Gastrocnemius medialis (tissue), 4 donors: ENCODE measurements at regions of chr6 and their contacts with region 1.

Region 1: DNA sequence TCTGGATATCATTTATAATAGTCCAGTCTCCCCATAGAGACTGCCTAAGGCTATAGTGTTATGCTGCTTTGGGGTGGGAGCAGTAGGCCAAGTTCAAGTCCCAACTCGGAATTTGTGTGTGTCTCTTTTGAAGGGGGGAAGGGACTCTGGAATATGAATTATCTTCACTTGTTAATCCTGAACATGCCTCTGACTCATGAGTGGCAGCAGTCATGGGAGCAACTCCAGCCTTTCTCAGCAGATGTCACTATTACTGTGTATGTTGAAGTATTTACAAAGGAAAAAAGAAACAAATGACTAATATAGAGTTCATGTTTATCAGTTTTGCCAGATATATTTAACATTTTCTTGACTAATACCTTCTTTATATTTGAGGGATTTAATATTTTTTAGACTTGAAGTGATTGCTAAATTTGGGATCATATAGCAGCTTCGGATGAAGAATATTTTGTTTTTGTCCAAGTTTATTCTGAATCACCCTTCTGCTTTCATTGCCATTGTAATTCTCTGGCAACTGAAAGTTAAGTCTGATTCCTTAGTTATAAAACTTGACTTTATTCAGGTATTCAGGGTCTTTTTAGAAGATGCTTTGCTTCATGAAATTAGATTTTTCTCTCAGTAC is 23.4 kb downstream of the FAM217A start:
- DNase-seq: peak; percentile 40 to 49
- ATAC-seq: peak; percentile 93 to 95
- H3K4me3 ChIP-seq: no peak overlapping the region
- H3K27ac ChIP-seq: peak overlapping the region; percentile 71 to 76 (median 71)
- H3K4me1 ChIP-seq: peaks cover 4% of the 10 kb centered on the region in 2 donors
- H3K27me3 ChIP-seq: no peaks in the 10 kb centered on the region
- CTCF ChIP-seq: peak in 4 of 5 experiments; percentile 45 to 64 (median 52)
- POLR2A ChIP-seq: no peak

Region 2: DNA sequence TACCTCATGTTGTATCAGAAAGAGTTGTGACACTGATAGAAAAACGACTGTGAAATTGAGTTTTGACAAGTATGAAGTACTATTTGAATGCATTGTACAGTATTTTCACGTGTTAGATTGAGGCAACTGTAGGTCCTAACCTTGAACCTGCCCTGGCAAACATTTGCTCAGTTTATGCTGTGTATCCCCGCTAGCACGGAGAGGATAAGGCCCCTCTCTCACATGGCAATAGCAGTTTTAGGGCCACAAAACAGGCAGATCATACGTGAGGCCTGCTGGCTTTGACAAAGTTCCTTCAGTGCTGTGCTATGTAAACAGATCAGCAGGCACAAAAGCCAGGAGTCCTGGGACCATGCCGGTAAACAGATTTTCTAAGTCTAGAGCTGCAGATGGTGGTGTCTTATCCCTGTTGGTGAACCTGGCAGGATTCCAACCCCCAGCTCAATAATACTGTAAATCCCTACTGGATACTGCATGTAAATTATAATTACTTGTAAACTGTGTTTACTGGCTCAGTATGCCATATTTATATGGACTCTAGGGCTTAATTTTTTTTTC is 47.2 kb after region 1 on chr6:
- in situ Hi-C with region 1: no loop called
- intact Hi-C with region 1: loop called (anchors 5 kb)
- DNase-seq: no peak
- ATAC-seq: peak in 1 of 2 donors; percentile 75
- H3K4me3 ChIP-seq: no peak overlapping the region
- H3K27ac ChIP-seq: peak overlapping the region; percentile 55 to 77 (median 66)
- H3K4me1 ChIP-seq: peaks cover 29 to 43% of the 10 kb centered on the region in 2 donors
- H3K27me3 ChIP-seq: no peaks in the 10 kb centered on the region
- CTCF ChIP-seq: no peak
- POLR2A ChIP-seq: no peak

Region 3: GRCh38 chr6:4145083-4145482 is 89.6 kb after region 1 on chr6:
- in situ Hi-C with region 1: loop called in 2 of 4 experiments (anchors 5 to 10 kb)
- intact Hi-C with region 1: no loop called
- DNase-seq: no peak
- ATAC-seq: no peak
- H3K4me3 ChIP-seq: no peak overlapping the region
- H3K27ac ChIP-seq: no peak overlapping the region
- H3K4me1 ChIP-seq: no peaks in the 10 kb centered on the region
- H3K27me3 ChIP-seq: no peaks in the 10 kb centered on the region
- CTCF ChIP-seq: no peak
- POLR2A ChIP-seq: no peak

Region 4: GRCh38 chr6:4155848-4156466 is 100.4 kb after region 1 on chr6:
- in situ Hi-C with region 1: loop called in 3 of 4 experiments (anchors 5 to 10 kb)
- intact Hi-C with region 1: loop called (anchors 1 kb)
- DNase-seq: peak; percentile 70 to 79
- ATAC-seq: peak; percentile 93 to 94
- H3K4me3 ChIP-seq: peak overlapping the region in 1 of 4 donors; percentile 10
- H3K27ac ChIP-seq: no peak overlapping the region
- H3K4me1 ChIP-seq: no peaks in the 10 kb centered on the region
- H3K27me3 ChIP-seq: no peaks in the 10 kb centered on the region
- CTCF ChIP-seq: peak; percentile 74 to 92 (median 86)
- POLR2A ChIP-seq: no peak

Region 5: GRCh38 chr6:4210629-4211423 is 155.3 kb after region 1 on chr6:
- in situ Hi-C with region 1: no loop called
- intact Hi-C with region 1: loop called (anchors 5 kb)
- DNase-seq: peak in 1 of 2 donors; percentile 25
- ATAC-seq: peak; percentile 43 to 46
- H3K4me3 ChIP-seq: no peak overlapping the region
- H3K27ac ChIP-seq: no peak overlapping the region
- H3K4me1 ChIP-seq: peaks cover 15 to 21% of the 10 kb centered on the region in 2 donors
- H3K27me3 ChIP-seq: no peaks in the 10 kb centered on the region
- CTCF ChIP-seq: peak; percentile 35 to 67 (median 48)
- POLR2A ChIP-seq: no peak